Activated B cell treated with CpG ODN at 0.5 μM for 24 hours (primary cell): ENCODE measurements at regions of chr20 and their contacts with region 1.

Region 1: GRCh38 chr20:36439040-36439730 is 102.1 kb upstream of the MYL9 start:
- DNase-seq: peak; percentile 58
- ATAC-seq: peak; percentile 48
- H3K4me3 Mint-ChIP-seq: no peak overlapping the region
- H3K27ac Mint-ChIP-seq: no peak overlapping the region
- H3K4me1 Mint-ChIP-seq: peaks cover 10% of the 10 kb centered on the region
- H3K27me3 Mint-ChIP-seq: peaks cover 4% of the 10 kb centered on the region
- CTCF ChIP-seq: no peak

Region 2: DNA sequence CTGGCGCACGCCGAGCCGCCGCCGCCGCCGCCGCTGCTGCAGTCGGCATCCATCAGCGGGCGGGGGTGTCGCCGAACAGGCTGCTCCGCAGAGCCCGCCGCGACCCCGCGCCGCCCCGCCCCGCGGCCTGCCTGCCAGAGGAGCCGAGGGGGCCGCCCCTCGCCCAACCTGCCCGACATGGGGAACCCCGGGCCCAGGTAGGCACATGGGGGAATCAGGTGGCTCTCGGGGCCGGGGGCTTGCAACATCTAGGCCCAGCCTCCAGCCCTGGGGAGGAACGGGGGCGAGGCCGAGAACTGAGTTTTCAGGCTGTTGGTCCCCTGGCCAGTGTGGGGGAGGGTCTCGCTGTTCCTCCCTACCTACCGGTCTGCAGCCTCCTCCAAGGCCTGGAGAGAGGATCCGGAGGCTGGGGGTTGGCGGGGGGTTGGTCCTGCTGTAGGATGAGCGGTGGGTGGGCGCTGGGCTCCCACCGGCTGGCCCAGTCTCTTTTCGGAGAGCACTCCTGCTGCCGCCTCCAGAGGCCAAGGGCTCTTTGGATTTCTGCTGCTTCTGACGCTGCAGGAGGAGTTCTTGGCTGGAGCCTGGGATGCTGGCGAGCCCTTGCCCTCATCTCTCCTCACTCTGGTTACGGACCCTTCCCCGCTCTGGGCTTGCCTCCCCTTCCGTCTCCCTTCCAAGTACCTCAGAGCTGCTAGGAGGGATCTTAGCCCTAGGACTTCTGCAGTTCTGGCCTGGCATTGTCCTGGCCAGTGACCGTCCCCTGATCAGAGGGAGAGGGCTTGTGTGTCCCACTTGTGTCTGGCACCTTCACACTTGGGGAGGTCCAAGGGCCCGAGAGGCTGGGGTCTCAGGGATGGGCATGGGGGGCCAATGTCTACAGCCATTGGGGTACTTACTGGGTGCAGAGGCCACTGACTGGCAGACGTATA is 284.2 kb before region 1 on chr20 and contains the start of gene EPB41L1:
- CTCF ChIA-PET with region 1: interaction called, 4 read pairs
- POLR2A ChIA-PET with region 1: no interaction called
- intact Hi-C with region 1: loop called (anchors 1 kb)
- DNase-seq: no peak
- ATAC-seq: no peak
- H3K4me3 Mint-ChIP-seq: peak within 1 kb of the TSS; percentile 59
- H3K27ac Mint-ChIP-seq: no peak within 1 kb of the TSS
- H3K4me1 Mint-ChIP-seq: peaks cover 12% of the 10 kb centered on the region
- H3K27me3 Mint-ChIP-seq: peaks cover 23% of the 10 kb centered on the region
- CTCF ChIP-seq: no peak
- total RNA-seq, gene EPB41L1: 0.49 and 0.64 TPM in 2 replicates

Region 3: GRCh38 chr20:36214684-36215256 is 224.4 kb before region 1 on chr20:
- CTCF ChIA-PET with region 1: interaction called, 7 read pairs
- POLR2A ChIA-PET with region 1: no interaction called
- intact Hi-C with region 1: loop called (anchors 1 kb)
- DNase-seq: no peak
- ATAC-seq: peak; percentile 49
- H3K4me3 Mint-ChIP-seq: no peak overlapping the region
- H3K27ac Mint-ChIP-seq: no peak overlapping the region
- H3K4me1 Mint-ChIP-seq: no peaks in the 10 kb centered on the region
- H3K27me3 Mint-ChIP-seq: peaks cover 2% of the 10 kb centered on the region
- CTCF ChIP-seq: peak; percentile 34

Region 4: DNA sequence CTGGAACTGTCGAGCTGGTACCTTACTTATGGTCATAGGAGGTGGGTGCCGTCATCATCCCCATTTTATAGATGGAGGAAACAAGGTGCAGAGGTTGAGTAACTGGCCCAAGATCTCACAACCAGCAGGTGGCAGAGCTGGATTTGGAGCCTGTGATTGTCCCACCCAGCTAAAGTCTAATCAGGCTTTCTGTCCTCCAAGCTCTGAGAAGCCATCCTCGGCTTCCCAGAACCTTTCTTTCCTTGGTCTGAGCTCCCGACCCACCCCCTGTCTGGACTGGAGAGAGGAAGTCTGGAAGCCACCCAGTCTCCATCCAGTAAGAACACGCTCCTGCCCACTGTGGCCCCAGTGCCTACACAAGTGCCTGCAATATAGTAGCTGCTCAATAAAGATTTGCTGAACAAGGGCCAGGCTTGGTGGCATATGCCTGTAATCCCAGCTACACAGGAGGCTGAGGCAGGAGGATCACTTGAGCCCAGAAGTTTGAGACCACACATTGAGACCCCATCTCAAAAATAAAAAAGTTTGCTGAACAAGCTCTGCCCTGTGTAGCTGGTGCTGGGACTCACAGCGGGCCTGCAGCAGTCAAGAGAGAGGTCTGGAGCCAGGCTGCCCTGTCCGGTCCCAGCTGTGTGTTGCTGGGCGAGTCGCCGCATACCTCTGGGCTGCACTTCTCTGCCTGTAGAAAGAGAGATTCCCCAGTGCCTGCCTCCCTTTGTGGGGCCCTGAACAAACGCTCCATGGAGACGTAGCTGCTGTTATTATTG is 165.6 kb before region 1 on chr20:
- CTCF ChIA-PET with region 1: interaction called, 11 read pairs
- POLR2A ChIA-PET with region 1: interaction called, 3 read pairs
- intact Hi-C with region 1: loop called (anchors 1 kb)
- DNase-seq: no peak
- ATAC-seq: no peak
- H3K4me3 Mint-ChIP-seq: no peak overlapping the region
- H3K27ac Mint-ChIP-seq: no peak overlapping the region
- H3K4me1 Mint-ChIP-seq: no peaks in the 10 kb centered on the region
- H3K27me3 Mint-ChIP-seq: peaks cover 18% of the 10 kb centered on the region
- CTCF ChIP-seq: no peak

Region 5: DNA sequence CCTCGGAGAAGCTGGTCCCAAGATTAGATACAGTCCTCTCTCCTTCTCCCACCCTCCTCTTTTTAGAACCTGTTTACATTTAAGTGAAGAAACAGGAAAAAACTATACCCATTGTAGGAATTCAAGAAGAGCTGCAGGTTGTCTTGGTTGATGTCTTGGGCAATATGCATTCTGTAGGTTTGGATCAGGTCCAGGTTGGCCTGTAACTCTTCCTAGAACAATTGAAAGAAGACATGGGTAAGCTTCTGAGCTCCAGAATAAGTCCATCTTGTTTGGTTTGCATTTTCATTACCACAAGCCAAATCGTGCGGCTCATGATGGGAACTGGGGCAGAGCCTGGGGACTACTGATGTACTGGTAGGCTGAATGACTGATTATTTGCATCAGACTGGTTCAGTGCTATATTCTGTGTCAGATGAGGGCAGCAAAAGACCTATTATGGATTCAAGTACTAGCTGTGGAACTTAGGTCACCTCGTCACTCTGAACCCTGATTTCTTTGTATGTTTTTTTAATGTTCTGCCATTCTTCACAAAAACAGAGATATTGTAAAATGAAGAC is 227.1 kb after region 1 on chr20:
- CTCF ChIA-PET with region 1: no interaction called
- POLR2A ChIA-PET with region 1: no interaction called
- intact Hi-C with region 1: no loop called
- DNase-seq: no peak
- ATAC-seq: no peak
- H3K4me3 Mint-ChIP-seq: no peak overlapping the region
- H3K27ac Mint-ChIP-seq: no peak overlapping the region
- H3K4me1 Mint-ChIP-seq: no peaks in the 10 kb centered on the region
- H3K27me3 Mint-ChIP-seq: no peaks in the 10 kb centered on the region
- CTCF ChIP-seq: no peak

Region 6: DNA sequence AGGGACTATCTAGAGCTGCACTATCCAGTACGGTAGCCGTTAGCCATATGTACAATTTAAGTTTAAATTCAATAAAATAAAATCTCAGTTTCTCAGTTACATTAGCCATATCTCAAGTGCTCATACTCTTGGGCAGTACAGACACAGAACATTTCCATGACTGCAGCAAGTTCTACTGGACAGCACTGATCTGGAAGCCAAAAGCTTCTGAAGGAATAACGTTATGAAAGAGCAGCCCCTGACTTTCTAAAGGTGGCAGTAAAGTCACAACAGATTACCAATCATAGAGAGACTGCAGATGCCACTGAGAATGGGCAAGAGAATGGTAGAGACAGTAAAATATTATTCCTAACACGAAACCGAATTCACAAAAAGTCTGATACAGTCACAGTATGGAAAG is 269.9 kb after region 1 on chr20:
- CTCF ChIA-PET with region 1: no interaction called
- POLR2A ChIA-PET with region 1: no interaction called
- intact Hi-C with region 1: no loop called
- DNase-seq: no peak
- ATAC-seq: no peak
- H3K4me3 Mint-ChIP-seq: no peak overlapping the region
- H3K27ac Mint-ChIP-seq: no peak overlapping the region
- H3K4me1 Mint-ChIP-seq: no peaks in the 10 kb centered on the region
- H3K27me3 Mint-ChIP-seq: no peaks in the 10 kb centered on the region
- CTCF ChIP-seq: no peak